ENCODE measurements at regions of chrX and their contacts with region 1.

Region 1: GRCh38 chrX:24231131-24231540 is 81.6 kb downstream of the ZFX start:
- DNase-seq: no peak
- ATAC-seq: no peak
- H3K4me3 ChIP-seq: no peak overlapping the region
- H3K27ac ChIP-seq: no peak overlapping the region
- H3K4me1 ChIP-seq: no peaks in the 10 kb centered on the region
- H3K27me3 ChIP-seq: no peaks in the 10 kb centered on the region
- CTCF ChIP-seq: no peak

Region 2: GRCh38 chrX:24169211-24169610 is 61.9 kb before region 1 on chrX:
- CTCF ChIA-PET with region 1: no interaction called
- POLR2A ChIA-PET with region 1: interaction called, 12 read pairs
- in situ Hi-C with region 1: no loop called
- intact Hi-C with region 1: no loop called
- DNase-seq: no peak
- ATAC-seq: no peak
- H3K4me3 ChIP-seq: no peak overlapping the region
- H3K27ac ChIP-seq: no peak overlapping the region
- H3K4me1 ChIP-seq: peaks cover 11% of the 10 kb centered on the region
- H3K27me3 ChIP-seq: no peaks in the 10 kb centered on the region
- CTCF ChIP-seq: no peak

Region 3: GRCh38 chrX:24184018-24184417 is 47.1 kb before region 1 on chrX:
- CTCF ChIA-PET with region 1: no interaction called
- POLR2A ChIA-PET with region 1: no interaction called
- in situ Hi-C with region 1: no loop called
- intact Hi-C with region 1: no loop called
- DNase-seq: no peak
- ATAC-seq: no peak
- H3K4me3 ChIP-seq: no peak overlapping the region
- H3K27ac ChIP-seq: no peak overlapping the region
- H3K4me1 ChIP-seq: no peaks in the 10 kb centered on the region; the same call in 1 of the 2 replicates
- H3K27me3 ChIP-seq: no peaks in the 10 kb centered on the region
- CTCF ChIP-seq: no peak

Region 4: GRCh38 chrX:24371391-24371972 is 140.3 kb after region 1 on chrX:
- CTCF ChIA-PET with region 1: no interaction called
- POLR2A ChIA-PET with region 1: interaction called, 15 read pairs
- in situ Hi-C with region 1: no loop called
- intact Hi-C with region 1: no loop called
- DNase-seq: peak; percentile 8
- ATAC-seq: peak; percentile 75
- H3K4me3 ChIP-seq: no peak overlapping the region
- H3K27ac ChIP-seq: no peak overlapping the region
- H3K4me1 ChIP-seq: no peaks in the 10 kb centered on the region
- H3K27me3 ChIP-seq: no peaks in the 10 kb centered on the region
- CTCF ChIP-seq: peak; percentile 78

Measured in Panc1 (cell line).